ENCODE measurements at regions of chr12 and their contacts with region 1.

Region 1: GRCh38 chr12:80936498-80937390 is 990 bp downstream of the LIN7A start:
- DNase-seq: peak; percentile 44
- H3K4me3 ChIP-seq: peak overlapping the region; percentile 47 to 68 (median 64)
- H3K27ac ChIP-seq: no peak overlapping the region
- H3K4me1 ChIP-seq: peaks cover 2% of the 10 kb centered on the region
- H3K27me3 ChIP-seq: peaks cover 0 to 2% of the 10 kb centered on the region in 2 experiments
- CTCF ChIP-seq: no peak
- POLR2A ChIP-seq: no peak

Region 2: DNA sequence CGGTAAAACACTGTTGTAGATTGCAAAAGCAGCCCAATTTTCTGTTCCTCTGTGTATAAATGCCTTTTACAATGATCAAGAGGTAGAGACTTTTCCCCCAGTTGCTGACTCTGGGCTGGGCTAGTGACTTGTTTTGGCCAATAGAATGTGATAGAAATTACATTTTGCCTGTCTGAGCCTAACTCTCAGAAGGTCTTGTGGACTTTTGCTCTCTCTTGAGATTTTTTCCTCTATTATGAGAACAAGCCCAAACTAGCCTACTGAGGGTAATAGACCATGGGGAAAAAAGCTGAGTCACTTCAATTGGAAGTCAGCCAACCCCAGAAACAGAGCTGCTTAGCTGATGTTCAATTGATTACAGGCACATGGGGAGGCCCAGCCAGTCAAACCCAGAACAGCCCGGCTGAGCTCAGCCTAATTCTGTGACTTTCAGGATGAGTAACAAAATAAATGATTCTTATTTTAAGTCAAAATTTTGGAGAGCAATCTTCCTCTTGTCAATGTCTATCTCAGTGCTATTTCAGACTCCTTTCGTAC is 158.7 kb before region 1 on chr12:
- CTCF ChIA-PET with region 1: no interaction called
- POLR2A ChIA-PET with region 1: no interaction called
- dilution Hi-C with region 1: no loop called
- intact Hi-C with region 1: loop called (anchors 5 kb)
- DNase-seq: peak; percentile 92
- H3K4me3 ChIP-seq: no peak overlapping the region
- H3K27ac ChIP-seq: peak overlapping the region; percentile 87
- H3K4me1 ChIP-seq: peaks cover 11% of the 10 kb centered on the region
- H3K27me3 ChIP-seq: no peaks in the 10 kb centered on the region
- CTCF ChIP-seq: no peak
- POLR2A ChIP-seq: no peak

Region 3: GRCh38 chr12:80861623-80862378 is 74.9 kb before region 1 on chr12:
- CTCF ChIA-PET with region 1: no interaction called
- POLR2A ChIA-PET with region 1: no interaction called
- dilution Hi-C with region 1: no loop called
- intact Hi-C with region 1: no loop called
- DNase-seq: no peak
- H3K4me3 ChIP-seq: no peak overlapping the region
- H3K27ac ChIP-seq: no peak overlapping the region
- H3K4me1 ChIP-seq: no peaks in the 10 kb centered on the region
- H3K27me3 ChIP-seq: no peaks in the 10 kb centered on the region
- CTCF ChIP-seq: no peak
- POLR2A ChIP-seq: no peak

Region 4: GRCh38 chr12:81022531-81022930 is 85.8 kb after region 1 on chr12:
- CTCF ChIA-PET with region 1: no interaction called
- POLR2A ChIA-PET with region 1: no interaction called
- dilution Hi-C with region 1: no loop called
- intact Hi-C with region 1: no loop called
- DNase-seq: no peak
- H3K4me3 ChIP-seq: no peak overlapping the region
- H3K27ac ChIP-seq: no peak overlapping the region
- H3K4me1 ChIP-seq: no peaks in the 10 kb centered on the region
- H3K27me3 ChIP-seq: no peaks in the 10 kb centered on the region
- CTCF ChIP-seq: no peak
- POLR2A ChIP-seq: no peak

Region 5: GRCh38 chr12:81077686-81078441 is 141.1 kb after region 1 on chr12 and contains the start of gene ACSS3:
- CTCF ChIA-PET with region 1: no interaction called
- POLR2A ChIA-PET with region 1: no interaction called
- dilution Hi-C with region 1: no loop called
- intact Hi-C with region 1: loop called (anchors 5 kb)
- DNase-seq: no peak
- H3K4me3 ChIP-seq: peak within 1 kb of the TSS in 2 of 3 experiments; percentile 5 to 12
- H3K27ac ChIP-seq: peak within 1 kb of the TSS; percentile 19
- H3K4me1 ChIP-seq: peaks cover 15% of the 10 kb centered on the region
- H3K27me3 ChIP-seq: peaks cover 2 to 6% of the 10 kb centered on the region in 2 experiments
- CTCF ChIP-seq: no peak
- POLR2A ChIP-seq: no peak
- total RNA-seq, gene ACSS3: 0.53 and 0.86 TPM in 2 replicates